ENCODE measurements at regions of chr22 and their contacts with region 1.

Region 1: DNA sequence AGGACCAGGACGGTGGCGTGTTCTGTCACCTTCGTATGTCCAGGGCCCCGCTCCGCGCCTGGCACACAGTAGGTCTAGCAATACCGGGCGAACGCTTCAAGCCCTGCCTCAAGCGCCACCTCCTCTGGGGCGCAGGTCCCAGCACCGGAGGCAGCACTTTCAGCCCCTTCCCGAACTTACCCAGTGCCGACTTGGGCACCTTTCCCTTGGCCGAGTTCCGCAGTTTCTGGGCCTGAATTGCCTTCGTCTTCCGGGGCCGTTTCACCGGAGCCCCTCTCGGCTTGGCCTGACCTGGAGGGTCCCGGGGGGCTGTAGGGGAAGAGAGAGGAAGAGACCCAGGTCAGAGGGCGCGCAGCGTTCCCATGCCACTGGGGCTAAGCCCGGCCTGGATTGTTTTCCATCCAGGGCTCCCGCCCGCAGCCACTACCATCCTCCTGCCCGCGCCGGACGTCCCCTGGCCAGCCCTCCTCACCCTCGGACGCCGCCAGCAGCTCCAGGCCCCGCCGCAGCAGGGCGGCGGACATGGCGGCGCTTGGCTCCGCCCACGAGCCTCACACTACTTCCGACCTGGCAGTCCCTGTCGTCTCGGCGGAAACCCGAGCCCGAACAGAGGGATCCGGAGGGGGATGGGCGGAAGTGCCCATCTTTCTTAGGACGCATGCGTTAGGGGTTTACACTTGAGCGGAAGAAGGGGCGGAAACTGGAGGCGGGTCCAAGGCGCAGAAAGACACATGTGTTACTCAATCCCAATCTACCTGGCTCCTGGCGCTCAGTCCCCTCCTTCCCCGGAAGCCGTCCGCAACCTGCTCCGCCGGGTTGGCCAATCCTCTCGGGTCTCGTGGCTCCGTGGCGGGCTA is at the start of gene RPS19BP1:
- DNase-seq: peak; percentile 98 to 100 (median 99)
- ATAC-seq: peak; percentile 84
- H3K4me3 ChIP-seq: peak within 1 kb of the TSS; percentile 83 to 99
- H3K4me3 Mint-ChIP-seq: peak within 1 kb of the TSS; percentile 97
- H3K27ac ChIP-seq: peak within 1 kb of the TSS; percentile 78 to 97
- H3K27ac Mint-ChIP-seq: peak within 1 kb of the TSS; percentile 95
- H3K4me1 ChIP-seq: peaks cover 55% of the 10 kb centered on the region
- H3K4me1 Mint-ChIP-seq: peaks cover 56% of the 10 kb centered on the region
- H3K27me3 ChIP-seq: no peaks in the 10 kb centered on the region
- H3K27me3 Mint-ChIP-seq: no peaks in the 10 kb centered on the region
- CTCF ChIP-seq: no peak
- total RNA-seq, gene RPS19BP1: 69.0 to 70.5 TPM

Region 2: GRCh38 chr22:39343259-39344048 is 189.0 kb before region 1 on chr22:
- CTCF ChIA-PET with region 1: interaction called, 27 read pairs
- POLR2A ChIA-PET with region 1: no interaction called
- intact Hi-C with region 1: loop called (anchors 1 kb)
- DNase-seq: peak; percentile 32 to 76 (median 63)
- ATAC-seq: peak; percentile 91
- H3K4me3 ChIP-seq: no peak overlapping the region
- H3K4me3 Mint-ChIP-seq: no peak overlapping the region
- H3K27ac ChIP-seq: no peak overlapping the region
- H3K27ac Mint-ChIP-seq: no peak overlapping the region
- H3K4me1 ChIP-seq: no peaks in the 10 kb centered on the region
- H3K4me1 Mint-ChIP-seq: peaks cover 4% of the 10 kb centered on the region
- H3K27me3 ChIP-seq: no peaks in the 10 kb centered on the region
- H3K27me3 Mint-ChIP-seq: no peaks in the 10 kb centered on the region
- CTCF ChIP-seq: peak; percentile 60

Region 3: DNA sequence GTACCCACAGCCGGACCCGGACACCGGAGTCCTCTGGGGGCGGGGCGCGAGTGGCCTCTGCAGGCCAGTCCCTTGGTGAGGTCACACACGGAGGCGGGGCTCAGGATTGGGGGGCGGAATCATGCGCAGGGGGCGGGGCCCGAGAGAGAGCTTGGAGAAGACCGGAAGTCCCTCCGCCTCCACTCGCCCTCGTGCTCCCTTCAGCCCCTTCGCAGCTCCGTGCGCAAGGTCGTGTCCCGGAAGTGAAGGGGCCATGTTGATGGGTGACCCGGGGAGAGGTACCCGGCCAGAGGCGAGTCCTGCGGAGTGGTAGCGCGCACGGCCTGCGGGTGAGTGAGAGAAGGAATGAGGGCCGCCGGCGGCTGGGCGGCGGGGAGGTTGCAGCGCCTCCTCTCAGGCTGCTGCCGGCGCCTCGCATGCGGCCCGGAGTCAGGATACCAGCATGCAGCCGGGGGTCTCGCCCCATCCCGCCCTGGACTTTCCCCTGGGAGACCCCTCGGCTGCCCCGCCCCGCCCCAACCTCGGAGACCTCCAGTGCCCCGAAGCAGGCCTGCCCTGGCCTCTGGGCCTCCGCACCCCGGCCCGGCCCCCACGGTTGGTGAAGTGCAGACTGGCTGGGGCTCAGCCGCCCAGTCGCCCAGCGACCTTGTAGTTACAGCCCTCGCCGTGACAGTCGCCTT is 30.2 kb before region 1 on chr22 and contains the start of gene MIEF1:
- CTCF ChIA-PET with region 1: interaction called, 287 read pairs
- POLR2A ChIA-PET with region 1: interaction called, 10 read pairs
- intact Hi-C with region 1: loop called (anchors 1 kb)
- DNase-seq: peak; percentile 67 to 96 (median 88)
- ATAC-seq: peak; percentile 94
- H3K4me3 ChIP-seq: peak within 1 kb of the TSS; percentile 66 to 80
- H3K4me3 Mint-ChIP-seq: peak within 1 kb of the TSS; percentile 97
- H3K27ac ChIP-seq: peak within 1 kb of the TSS; percentile 64 to 80
- H3K27ac Mint-ChIP-seq: peak within 1 kb of the TSS; percentile 92
- H3K4me1 ChIP-seq: peaks cover 30% of the 10 kb centered on the region
- H3K4me1 Mint-ChIP-seq: peaks cover 41% of the 10 kb centered on the region
- H3K27me3 ChIP-seq: no peaks in the 10 kb centered on the region
- H3K27me3 Mint-ChIP-seq: no peaks in the 10 kb centered on the region
- CTCF ChIP-seq: no peak
- total RNA-seq, gene MIEF1: 24.8 to 25.3 TPM

Region 4: GRCh38 chr22:39580006-39580441 is 47.6 kb after region 1 on chr22:
- CTCF ChIA-PET with region 1: no interaction called
- POLR2A ChIA-PET with region 1: no interaction called
- intact Hi-C with region 1: no loop called
- DNase-seq: no peak
- ATAC-seq: no peak
- H3K4me3 ChIP-seq: no peak overlapping the region
- H3K4me3 Mint-ChIP-seq: no peak overlapping the region
- H3K27ac ChIP-seq: no peak overlapping the region
- H3K27ac Mint-ChIP-seq: no peak overlapping the region
- H3K4me1 ChIP-seq: no peaks in the 10 kb centered on the region
- H3K4me1 Mint-ChIP-seq: no peaks in the 10 kb centered on the region
- H3K27me3 ChIP-seq: no peaks in the 10 kb centered on the region
- H3K27me3 Mint-ChIP-seq: peaks cover 10% of the 10 kb centered on the region
- CTCF ChIP-seq: no peak

Region 5: DNA sequence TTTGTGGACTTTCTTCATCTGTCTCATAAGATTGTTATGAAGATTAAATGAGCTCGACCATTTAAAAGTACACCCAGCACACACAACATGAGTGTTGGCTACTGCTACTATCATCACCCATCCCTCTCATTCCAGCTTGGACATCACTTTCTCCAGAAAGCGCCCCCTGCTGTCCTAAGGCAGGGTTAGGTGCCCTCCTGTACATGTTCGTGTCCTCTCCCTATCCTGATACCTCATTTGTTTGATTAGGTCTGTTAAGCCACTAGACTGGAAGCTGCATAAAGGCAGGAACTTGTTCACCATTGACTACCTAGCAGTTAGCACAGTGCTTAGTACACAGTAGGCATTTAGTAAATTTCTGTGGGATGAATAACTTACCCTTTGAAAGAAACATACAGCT is 275.6 kb after region 1 on chr22:
- CTCF ChIA-PET with region 1: interaction called, 19 read pairs
- POLR2A ChIA-PET with region 1: no interaction called
- intact Hi-C with region 1: no loop called
- DNase-seq: peak in 7 of 9 experiments; percentile 7 to 55 (median 34)
- ATAC-seq: no peak
- H3K4me3 ChIP-seq: no peak overlapping the region
- H3K4me3 Mint-ChIP-seq: no peak overlapping the region
- H3K27ac ChIP-seq: no peak overlapping the region
- H3K27ac Mint-ChIP-seq: no peak overlapping the region
- H3K4me1 ChIP-seq: no peaks in the 10 kb centered on the region
- H3K4me1 Mint-ChIP-seq: peaks cover 8% of the 10 kb centered on the region
- H3K27me3 ChIP-seq: no peaks in the 10 kb centered on the region
- H3K27me3 Mint-ChIP-seq: peaks cover 16% of the 10 kb centered on the region
- CTCF ChIP-seq: no peak

Region 6: DNA sequence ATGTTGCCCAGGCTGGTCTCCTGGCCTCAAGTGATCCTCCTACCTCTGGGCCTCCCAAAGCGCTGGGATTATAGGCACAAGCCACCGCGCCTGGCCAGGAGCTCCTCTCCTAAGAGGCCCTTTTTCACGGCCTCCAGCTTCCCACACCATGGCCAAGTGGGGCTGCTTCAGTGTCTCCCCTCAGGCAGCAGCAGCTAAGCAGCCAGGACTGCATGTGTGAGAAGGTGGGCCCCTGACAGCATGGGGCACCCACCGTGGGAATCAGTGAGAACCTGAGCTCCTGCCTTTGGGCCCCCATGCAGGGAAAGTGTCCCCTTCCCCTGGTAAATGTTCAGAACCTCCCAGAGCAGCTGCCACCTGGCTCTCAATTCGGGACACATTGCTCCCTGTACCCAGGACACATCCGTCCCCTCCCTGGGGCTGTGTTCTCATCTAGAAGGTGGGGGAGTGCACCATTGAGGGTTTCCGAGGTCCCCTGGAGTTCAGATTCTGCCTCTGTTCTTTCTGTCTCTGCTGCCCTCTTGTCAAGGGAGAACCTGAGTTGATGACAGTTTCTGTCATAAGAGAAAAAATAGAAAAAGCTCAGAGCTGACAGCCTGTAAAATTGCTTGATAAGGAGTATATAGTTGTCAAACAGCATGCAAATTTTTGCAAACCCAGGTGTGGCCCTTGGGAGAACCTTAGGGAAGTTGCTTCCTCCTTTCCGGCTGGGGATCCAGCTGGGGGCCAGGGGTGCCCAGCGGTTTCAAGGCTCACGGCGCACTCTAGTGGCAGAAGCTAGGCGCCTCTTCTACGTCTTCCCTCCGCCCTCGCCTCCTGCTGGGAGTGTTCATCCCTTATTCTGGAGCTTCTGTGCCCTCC is 492.0 kb after region 1 on chr22:
- CTCF ChIA-PET with region 1: interaction called, 132 read pairs
- POLR2A ChIA-PET with region 1: interaction called, 8 read pairs
- intact Hi-C with region 1: loop called in 1 of 2 experiments (anchors 1 kb)
- DNase-seq: peak; percentile 20 to 78 (median 64)
- ATAC-seq: peak; percentile 72
- H3K4me3 ChIP-seq: no peak overlapping the region
- H3K4me3 Mint-ChIP-seq: no peak overlapping the region
- H3K27ac ChIP-seq: no peak overlapping the region
- H3K27ac Mint-ChIP-seq: no peak overlapping the region
- H3K4me1 ChIP-seq: peaks cover 6% of the 10 kb centered on the region
- H3K4me1 Mint-ChIP-seq: peaks cover 5% of the 10 kb centered on the region
- H3K27me3 ChIP-seq: no peaks in the 10 kb centered on the region
- H3K27me3 Mint-ChIP-seq: no peaks in the 10 kb centered on the region
- CTCF ChIP-seq: peak; percentile 80

Region 7: GRCh38 chr22:40636380-40637182 is 1104.1 kb after region 1 on chr22 and contains the start of gene MRTFA:
- CTCF ChIA-PET with region 1: no interaction called
- POLR2A ChIA-PET with region 1: no interaction called
- intact Hi-C with region 1: loop called in 1 of 2 experiments (anchors 10 kb)
- DNase-seq: peak; percentile 98 to 100 (median 99)
- ATAC-seq: peak; percentile 93
- H3K4me3 ChIP-seq: peak within 1 kb of the TSS; percentile 98 to 100
- H3K4me3 Mint-ChIP-seq: peak within 1 kb of the TSS; percentile 99
- H3K27ac ChIP-seq: peak within 1 kb of the TSS; percentile 89
- H3K27ac Mint-ChIP-seq: peak within 1 kb of the TSS; percentile 98
- H3K4me1 ChIP-seq: peaks cover 34% of the 10 kb centered on the region
- H3K4me1 Mint-ChIP-seq: peaks cover 45% of the 10 kb centered on the region
- H3K27me3 ChIP-seq: no peaks in the 10 kb centered on the region
- H3K27me3 Mint-ChIP-seq: no peaks in the 10 kb centered on the region
- CTCF ChIP-seq: no peak
- total RNA-seq, gene MRTFA: 53.7 to 56.7 TPM

Measured in CD8-positive, alpha-beta T cell (primary cell).